HepG2 (cell line): ENCODE measurements at regions of chr1 and their contacts with region 1.

Region 1: DNA sequence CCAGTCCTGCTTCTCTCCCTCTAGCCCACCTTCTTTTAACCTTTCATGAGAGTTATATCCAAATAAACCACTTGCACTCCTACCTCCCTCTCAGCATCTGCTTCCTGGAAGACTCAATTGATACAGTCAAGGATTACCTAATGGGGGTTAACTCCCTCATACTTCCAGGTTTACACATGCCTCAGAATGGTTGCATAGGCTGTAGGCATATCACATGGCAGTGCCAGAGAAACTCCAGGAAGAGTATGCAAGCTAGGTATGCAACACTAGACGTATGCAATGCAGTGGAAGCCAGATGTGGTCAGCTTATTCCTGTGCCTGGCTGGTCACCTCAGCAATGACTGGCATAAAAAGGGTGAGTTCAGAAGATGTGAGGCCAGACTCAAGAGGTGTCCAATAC is 32.7 kb upstream of the VANGL1 start:
- DNase-seq: no peak
- ATAC-seq: no peak
- H3K4me3 ChIP-seq: no peak overlapping the region
- H3K27ac ChIP-seq: no peak overlapping the region
- H3K4me1 ChIP-seq: no peaks in the 10 kb centered on the region
- H3K27me3 ChIP-seq: 0 out of 5 replicates have a peak, but pooled peaks cover 0 to 4% of the 10 kb centered on the region in 2 experiments
- CTCF ChIP-seq: no peak
- EP300 ChIP-seq: no peak
- POLR2A ChIP-seq: no peak
- RAD21 ChIP-seq: no peak

Region 2: DNA sequence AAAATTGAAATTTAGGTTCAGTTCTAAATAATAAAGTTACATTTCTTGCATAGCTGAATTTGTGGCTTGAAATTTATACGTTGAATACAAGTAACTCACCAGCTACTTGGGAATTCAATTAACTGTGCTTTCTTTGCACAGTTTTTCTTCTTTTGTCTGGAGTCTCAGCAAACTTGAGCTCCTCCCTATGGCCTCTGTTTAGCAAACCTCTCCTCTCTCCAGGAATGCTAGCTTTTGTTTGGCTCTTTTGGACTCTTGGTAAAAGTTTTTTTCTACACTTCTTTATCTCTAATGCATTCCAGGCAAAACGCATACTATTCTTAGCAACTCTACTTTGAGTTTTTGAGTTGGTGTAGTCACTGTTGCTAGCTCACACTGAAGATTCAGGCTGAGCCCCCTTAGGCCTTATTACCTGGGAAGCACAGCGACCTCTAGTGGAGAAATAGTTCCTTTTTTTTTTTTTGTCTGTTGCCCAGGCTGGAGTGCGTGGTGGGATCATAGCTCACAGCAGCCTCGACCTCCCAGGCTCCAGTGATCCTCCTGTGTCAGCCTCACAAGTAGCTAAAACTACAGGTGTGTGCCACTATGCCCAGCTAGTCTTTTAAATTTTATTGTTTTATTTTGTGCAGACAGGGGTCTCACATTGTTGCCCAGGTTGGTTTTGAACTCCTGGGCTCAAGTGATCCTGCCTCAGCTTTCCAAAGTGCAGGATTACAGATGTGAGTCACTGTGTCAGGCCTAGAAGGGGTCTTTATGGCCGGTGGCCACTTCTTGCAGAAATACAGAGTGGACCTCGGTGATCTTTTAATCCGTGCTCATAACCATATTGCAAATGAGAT is 97.8 kb after region 1 on chr1:
- CTCF ChIA-PET with region 1: interaction called, 17 read pairs
- POLR2A ChIA-PET with region 1: no interaction called
- in situ Hi-C with region 1: loop called (anchors 5 kb)
- intact Hi-C with region 1: loop called (anchors 1 kb)
- DNase-seq: peak; percentile 42
- ATAC-seq: peak; percentile 64
- H3K4me3 ChIP-seq: no peak overlapping the region
- H3K27ac ChIP-seq: no peak overlapping the region
- H3K4me1 ChIP-seq: peaks cover 27% of the 10 kb centered on the region
- H3K27me3 ChIP-seq: no peaks in the 10 kb centered on the region
- CTCF ChIP-seq: peak; percentile 68
- EP300 ChIP-seq: no peak
- POLR2A ChIP-seq: no peak
- RAD21 ChIP-seq: no peak

Region 3: GRCh38 chr1:115764541-115764940 is 155.5 kb after region 1 on chr1:
- CTCF ChIA-PET with region 1: interaction called, 10 read pairs
- POLR2A ChIA-PET with region 1: no interaction called
- in situ Hi-C with region 1: no loop called
- intact Hi-C with region 1: loop called (anchors 1 kb)
- DNase-seq: peak; percentile 57
- ATAC-seq: peak; percentile 82
- H3K4me3 ChIP-seq: no peak overlapping the region
- H3K27ac ChIP-seq: no peak overlapping the region
- H3K4me1 ChIP-seq: no peaks in the 10 kb centered on the region
- H3K27me3 ChIP-seq: peaks cover 0 to 5% of the 10 kb centered on the region in 2 experiments; a peak in 1 of 5 replicates
- CTCF ChIP-seq: peak; percentile 78
- EP300 ChIP-seq: no peak
- POLR2A ChIP-seq: no peak
- RAD21 ChIP-seq: peak; percentile 55; the same call in 1 of the 2 replicates

Region 4: DNA sequence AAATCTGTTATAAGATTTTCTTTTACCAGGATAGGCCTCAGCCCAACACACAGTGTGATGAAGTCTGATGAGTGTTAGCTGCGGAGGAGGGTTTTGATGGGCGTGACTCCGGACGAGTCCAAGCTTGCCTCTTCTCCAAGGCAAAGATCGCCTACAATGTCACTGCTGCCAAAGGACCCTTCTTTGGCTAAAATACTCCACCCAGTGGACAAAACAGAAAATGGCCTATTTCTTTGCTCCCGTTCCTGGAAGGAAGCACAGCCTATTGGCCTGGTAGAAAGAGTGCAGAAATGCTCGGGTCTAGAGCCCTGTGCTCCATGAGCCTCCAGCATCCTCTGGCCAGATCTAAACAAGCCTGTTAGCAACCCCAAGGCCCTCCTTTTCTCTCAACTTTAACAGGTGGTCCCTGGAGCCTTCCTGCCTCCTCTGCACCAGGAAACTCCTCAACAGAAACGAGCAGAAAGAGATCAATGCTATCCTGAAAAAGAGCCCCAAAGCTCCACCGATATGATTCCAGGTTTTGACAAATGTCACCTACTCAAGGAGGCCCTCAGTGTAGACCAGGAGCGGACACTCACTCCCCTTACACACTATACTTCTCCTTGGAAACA is 162.9 kb after region 1 on chr1:
- CTCF ChIA-PET with region 1: interaction called, 11 read pairs
- POLR2A ChIA-PET with region 1: interaction called, 4 read pairs
- in situ Hi-C with region 1: loop called (anchors 5 kb)
- intact Hi-C with region 1: no loop called
- DNase-seq: peak; percentile 78
- ATAC-seq: peak; percentile 99
- H3K4me3 ChIP-seq: peak overlapping the region; percentile 26 to 50 (median 43); a peak in 5 of 6 replicates
- H3K27ac ChIP-seq: no peak overlapping the region
- H3K4me1 ChIP-seq: 0 out of 2 replicates have a peak, but pooled peaks cover 5% of the 10 kb centered on the region
- H3K27me3 ChIP-seq: peaks cover 0 to 5% of the 10 kb centered on the region in 2 experiments; a peak in 1 of 5 replicates
- CTCF ChIP-seq: peak; percentile 91
- EP300 ChIP-seq: no peak
- POLR2A ChIP-seq: no peak
- RAD21 ChIP-seq: peak; percentile 74